ENCODE measurements at regions of chr10 and their contacts with region 1.

Region 1: GRCh38 chr10:17512341-17513001 is 58.1 kb upstream of the ST8SIA6 start:
- DNase-seq: no peak
- ATAC-seq: no peak
- H3K4me3 ChIP-seq: no peak overlapping the region
- H3K4me3 Mint-ChIP-seq: peak overlapping the region; percentile 37
- H3K27ac ChIP-seq: peak overlapping the region; percentile 98
- H3K27ac Mint-ChIP-seq: peak overlapping the region; percentile 87 to 96
- H3K4me1 ChIP-seq: peaks cover 48% of the 10 kb centered on the region
- H3K4me1 Mint-ChIP-seq: peaks cover 45 to 48% of the 10 kb centered on the region in 2 donors
- H3K27me3 ChIP-seq: no peaks in the 10 kb centered on the region
- H3K27me3 Mint-ChIP-seq: no peaks in the 10 kb centered on the region
- CTCF ChIP-seq: no peak

Region 2: DNA sequence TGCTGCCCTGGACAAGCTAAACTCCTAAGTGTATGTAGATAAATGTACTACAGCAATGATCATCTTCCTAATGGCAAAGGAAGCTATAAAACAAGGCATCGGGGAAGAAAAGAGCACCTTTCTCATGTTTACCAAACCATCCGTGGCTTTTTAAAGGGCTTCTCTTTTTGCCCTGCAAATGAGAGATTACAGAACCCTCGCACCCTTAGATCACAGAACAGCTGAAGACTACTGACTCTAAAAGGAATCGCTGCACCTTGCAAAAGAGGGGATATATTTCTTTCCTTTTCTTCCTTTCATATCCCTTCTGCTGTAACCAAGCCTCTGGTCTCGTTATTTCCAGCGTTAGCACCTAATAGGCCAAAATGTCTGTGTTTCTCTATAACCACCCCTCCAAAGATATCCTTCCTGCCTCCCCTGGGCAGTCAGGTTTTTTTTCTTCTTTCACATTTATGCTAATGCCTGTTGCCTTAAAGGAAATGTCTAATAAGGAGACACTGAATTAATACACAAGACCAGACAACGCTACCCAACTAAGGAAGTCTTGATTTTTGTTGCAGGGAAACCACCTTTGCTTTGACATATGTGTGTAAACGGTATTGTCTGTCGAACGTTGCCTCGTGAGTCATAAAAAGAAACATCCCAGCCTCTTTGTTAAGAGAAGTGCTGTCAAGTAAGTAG is 68.6 kb before region 1 on chr10:
- intact Hi-C with region 1: loop called (anchors 1 kb)
- DNase-seq: peak in 1 of 2 donors; percentile 68
- ATAC-seq: peak; percentile 90 to 94 (median 94)
- H3K4me3 ChIP-seq: no peak overlapping the region
- H3K4me3 Mint-ChIP-seq: peak overlapping the region; percentile 59
- H3K27ac ChIP-seq: peak overlapping the region; percentile 37
- H3K27ac Mint-ChIP-seq: peak overlapping the region; percentile 88 to 94
- H3K4me1 ChIP-seq: peaks cover 5% of the 10 kb centered on the region
- H3K4me1 Mint-ChIP-seq: peaks cover 27 to 36% of the 10 kb centered on the region in 2 donors
- H3K27me3 ChIP-seq: no peaks in the 10 kb centered on the region
- H3K27me3 Mint-ChIP-seq: no peaks in the 10 kb centered on the region
- CTCF ChIP-seq: no peak

Region 3: GRCh38 chr10:17454161-17455014 is 58.1 kb before region 1 on chr10 and contains the start of gene ST8SIA6:
- intact Hi-C with region 1: loop called (anchors 2 kb)
- DNase-seq: peak; percentile 68 to 73
- ATAC-seq: peak; percentile 70 to 76 (median 75)
- H3K4me3 ChIP-seq: peak within 1 kb of the TSS; percentile 70
- H3K4me3 Mint-ChIP-seq: peak within 1 kb of the TSS; percentile 93
- H3K27ac ChIP-seq: peak within 1 kb of the TSS; percentile 75
- H3K27ac Mint-ChIP-seq: peak within 1 kb of the TSS; percentile 87 to 94
- H3K4me1 ChIP-seq: peaks cover 19% of the 10 kb centered on the region
- H3K4me1 Mint-ChIP-seq: peaks cover 35 to 38% of the 10 kb centered on the region in 2 donors
- H3K27me3 ChIP-seq: no peaks in the 10 kb centered on the region
- H3K27me3 Mint-ChIP-seq: no peaks in the 10 kb centered on the region
- CTCF ChIP-seq: peak; percentile 11
- total RNA-seq, gene ST8SIA6: 12.2 to 19.7 (median 12.5) TPM

Region 4: DNA sequence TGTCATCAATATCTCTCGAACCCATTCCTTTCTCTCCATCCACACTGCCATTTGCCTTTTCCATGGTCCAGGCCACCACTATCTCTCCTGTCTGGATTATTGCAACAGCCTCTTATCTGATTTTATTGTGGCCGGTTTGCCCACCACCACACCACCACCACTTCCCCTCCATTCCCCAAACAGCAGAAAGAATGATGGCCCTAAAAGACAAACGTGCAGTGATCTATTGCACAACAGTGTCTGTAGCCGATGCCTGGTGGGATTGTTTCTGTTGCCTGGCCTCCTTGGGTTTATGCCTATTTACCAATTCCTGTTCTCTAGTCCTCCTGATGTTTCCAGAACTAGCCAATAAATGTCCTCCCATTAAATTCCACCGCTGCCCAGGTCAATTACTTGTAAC is 47.9 kb before region 1 on chr10:
- intact Hi-C with region 1: no loop called
- DNase-seq: no peak
- ATAC-seq: peak in 1 of 3 donors; percentile 52
- H3K4me3 ChIP-seq: no peak overlapping the region
- H3K4me3 Mint-ChIP-seq: no peak overlapping the region
- H3K27ac ChIP-seq: no peak overlapping the region
- H3K27ac Mint-ChIP-seq: no peak overlapping the region
- H3K4me1 ChIP-seq: no peaks in the 10 kb centered on the region
- H3K4me1 Mint-ChIP-seq: peaks cover 4 to 7% of the 10 kb centered on the region in 2 donors
- H3K27me3 ChIP-seq: no peaks in the 10 kb centered on the region
- H3K27me3 Mint-ChIP-seq: peaks cover 8 to 14% of the 10 kb centered on the region in 2 donors
- CTCF ChIP-seq: no peak

Region 5: DNA sequence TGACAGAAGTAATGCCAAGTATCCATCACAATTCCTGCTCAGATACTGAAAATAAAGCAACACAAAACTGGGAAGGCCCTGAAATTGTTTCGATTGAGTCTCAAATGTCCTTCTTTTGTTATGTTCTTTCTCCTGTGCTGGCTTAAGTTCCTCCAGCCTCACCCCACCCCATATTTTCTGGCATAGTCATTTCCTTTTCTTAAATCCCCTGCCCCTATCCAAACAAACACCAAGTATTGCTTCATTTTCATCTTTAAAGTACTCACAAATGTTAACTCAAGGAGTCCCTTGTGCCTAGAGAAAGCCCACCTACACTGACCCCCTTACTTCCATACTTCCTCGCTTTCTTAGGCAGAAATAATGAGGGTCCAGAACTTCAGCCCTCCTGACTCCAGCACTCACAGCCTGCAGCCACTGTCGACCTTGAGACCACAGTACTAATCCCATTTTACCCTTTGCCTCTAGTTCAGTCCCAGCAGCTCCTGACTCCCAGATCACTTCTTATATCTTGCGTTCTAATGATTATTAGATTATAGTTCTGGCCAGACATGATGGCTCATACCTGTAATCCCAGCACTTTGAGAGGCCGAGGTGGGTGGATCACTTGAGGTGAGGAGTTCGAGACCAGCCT is 15.2 kb after region 1 on chr10:
- intact Hi-C with region 1: no loop called
- DNase-seq: no peak
- ATAC-seq: no peak
- H3K4me3 ChIP-seq: no peak overlapping the region
- H3K4me3 Mint-ChIP-seq: no peak overlapping the region
- H3K27ac ChIP-seq: no peak overlapping the region
- H3K27ac Mint-ChIP-seq: no peak overlapping the region
- H3K4me1 ChIP-seq: no peaks in the 10 kb centered on the region
- H3K4me1 Mint-ChIP-seq: no peaks in the 10 kb centered on the region
- H3K27me3 ChIP-seq: no peaks in the 10 kb centered on the region
- H3K27me3 Mint-ChIP-seq: no peaks in the 10 kb centered on the region
- CTCF ChIP-seq: no peak

Measured in natural killer cell (primary cell).